ENCODE measurements at regions of chr5 and their contacts with region 1.

Region 1: GRCh38 chr5:18393589-18394442 is 759.6 kb downstream of the TAF11L14 start:
- DNase-seq: peak; percentile 58
- H3K4me3 ChIP-seq: peak overlapping the region in 1 of 2 experiments; percentile 40; a peak in 1 of 4 replicates
- H3K27ac ChIP-seq: no peak overlapping the region; a peak in 1 of 4 replicates
- H3K4me1 ChIP-seq: peaks cover 0 to 8% of the 10 kb centered on the region in 2 experiments; a peak in 2 of 4 replicates
- H3K27me3 ChIP-seq: no peaks in the 10 kb centered on the region
- CTCF ChIP-seq: peak; percentile 94
- EP300 ChIP-seq: no peak
- RAD21 ChIP-seq: peak; percentile 84

Region 2: DNA sequence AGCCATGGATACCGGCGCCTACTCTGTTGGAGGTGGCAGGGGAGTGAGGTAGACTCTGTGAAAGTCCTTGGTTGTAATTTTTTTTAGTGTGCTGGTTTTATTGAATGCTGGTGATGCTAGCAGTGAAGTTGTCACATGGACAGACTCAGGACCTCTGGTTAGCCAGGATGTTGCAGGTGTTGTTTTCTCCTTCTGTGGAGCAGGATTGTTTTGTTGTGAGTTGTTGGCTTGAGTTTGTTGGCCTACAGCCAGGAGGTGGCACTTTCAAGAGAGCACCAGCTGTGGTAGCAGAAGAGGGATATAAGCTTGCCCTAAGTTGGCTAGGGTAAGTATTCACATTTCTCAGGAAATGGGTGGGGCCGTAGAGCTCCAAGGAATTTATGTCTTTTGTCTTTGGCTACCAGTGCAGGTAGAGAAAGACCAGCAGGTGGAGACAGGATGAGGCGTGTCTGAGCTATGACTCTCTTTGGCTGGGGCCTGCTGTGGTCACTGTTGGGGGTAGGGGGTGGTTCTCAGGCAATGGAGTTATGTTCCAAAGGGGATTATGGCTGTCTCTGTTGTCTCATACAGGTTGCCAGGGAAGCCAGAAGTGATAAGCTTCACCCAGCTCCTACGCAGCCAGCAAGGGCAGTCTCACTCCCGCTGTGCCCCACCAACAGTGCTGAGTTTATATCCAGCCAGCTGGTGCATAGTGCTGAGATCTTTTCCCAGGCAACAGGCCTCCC is 510.9 kb before region 1 on chr5:
- CTCF ChIA-PET with region 1: no interaction called
- POLR2A ChIA-PET with region 1: no interaction called
- DNase-seq: no peak
- H3K4me3 ChIP-seq: no peak overlapping the region
- H3K27ac ChIP-seq: no peak overlapping the region
- H3K4me1 ChIP-seq: no peaks in the 10 kb centered on the region
- H3K27me3 ChIP-seq: no peaks in the 10 kb centered on the region
- CTCF ChIP-seq: no peak
- EP300 ChIP-seq: no peak
- RAD21 ChIP-seq: no peak

Region 3: DNA sequence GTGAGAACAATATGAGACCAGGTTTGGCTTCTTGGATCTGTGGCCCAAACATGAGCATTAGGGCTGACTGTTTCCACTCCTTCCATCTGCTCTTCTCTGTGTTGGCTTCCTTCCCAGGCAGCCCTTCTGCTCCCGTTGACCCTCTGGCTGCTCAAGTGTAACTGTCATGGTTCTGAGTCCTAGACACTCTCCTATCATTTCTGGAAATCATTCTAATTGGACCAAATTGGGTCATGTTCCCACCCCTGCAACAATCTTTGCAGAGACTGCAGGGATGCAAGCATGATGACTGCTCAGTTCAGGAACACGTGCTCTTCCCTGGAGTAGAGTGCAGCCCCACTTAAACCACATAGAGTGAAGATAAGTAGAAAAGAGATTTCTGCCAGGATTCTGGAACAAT is 18.2 kb before region 1 on chr5:
- CTCF ChIA-PET with region 1: interaction called, 14 read pairs
- POLR2A ChIA-PET with region 1: no interaction called
- DNase-seq: peak; percentile 36
- H3K4me3 ChIP-seq: no peak overlapping the region
- H3K27ac ChIP-seq: peak overlapping the region in 1 of 2 experiments; percentile 74; a peak in 2 of 4 replicates
- H3K4me1 ChIP-seq: peaks cover 0 to 4% of the 10 kb centered on the region in 2 experiments; a peak in 2 of 4 replicates
- H3K27me3 ChIP-seq: no peaks in the 10 kb centered on the region
- CTCF ChIP-seq: no peak
- EP300 ChIP-seq: peak in 1 of 2 experiments; percentile 63; a peak in 2 of 4 replicates
- RAD21 ChIP-seq: 0 out of 2 replicates have a peak, but pooled peaks have one; percentile 7

Region 4: DNA sequence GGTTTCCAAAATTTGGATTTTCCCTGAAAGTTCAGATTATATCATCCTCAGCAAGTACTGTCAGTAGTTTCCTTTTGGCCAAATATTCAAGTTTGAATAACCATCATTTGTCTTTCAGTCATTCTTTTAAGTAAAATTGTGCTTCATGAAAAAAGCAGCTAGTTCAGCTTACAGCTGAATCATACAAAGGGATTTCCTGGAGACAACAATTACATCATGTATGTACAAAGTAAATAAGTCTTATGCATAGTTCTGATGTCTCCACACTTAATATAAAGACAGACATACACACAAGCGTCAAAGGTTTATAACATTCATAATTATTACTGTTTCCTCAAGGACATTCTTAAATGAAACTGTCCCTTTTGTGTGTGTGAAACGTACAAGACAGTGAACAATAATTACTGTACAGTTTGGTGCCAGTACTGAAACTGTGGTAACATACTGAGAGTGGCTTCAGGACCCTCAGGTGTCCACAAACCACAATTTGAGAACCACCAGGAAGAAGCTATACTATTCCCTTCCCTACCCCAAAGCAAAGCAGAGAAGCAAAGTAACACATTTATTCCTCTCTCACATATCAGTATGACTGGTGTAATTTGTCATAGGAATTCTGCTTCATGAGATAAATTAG is 13.0 kb before region 1 on chr5:
- CTCF ChIA-PET with region 1: interaction called, 14 read pairs
- POLR2A ChIA-PET with region 1: no interaction called
- DNase-seq: no peak
- H3K4me3 ChIP-seq: no peak overlapping the region
- H3K27ac ChIP-seq: no peak overlapping the region
- H3K4me1 ChIP-seq: peaks cover 0 to under 1% of the 10 kb centered on the region in 2 experiments; a peak in 2 of 4 replicates
- H3K27me3 ChIP-seq: no peaks in the 10 kb centered on the region
- CTCF ChIP-seq: no peak
- EP300 ChIP-seq: no peak
- RAD21 ChIP-seq: no peak

Region 5: GRCh38 chr5:18699681-18700080 is 305.9 kb after region 1 on chr5:
- CTCF ChIA-PET with region 1: interaction called, 21 read pairs
- POLR2A ChIA-PET with region 1: no interaction called
- DNase-seq: no peak
- H3K4me3 ChIP-seq: no peak overlapping the region
- H3K27ac ChIP-seq: no peak overlapping the region
- H3K4me1 ChIP-seq: peaks cover 0 to 3% of the 10 kb centered on the region in 2 experiments; a peak in 1 of 4 replicates
- H3K27me3 ChIP-seq: no peaks in the 10 kb centered on the region
- CTCF ChIP-seq: no peak
- EP300 ChIP-seq: no peak
- RAD21 ChIP-seq: no peak